Transverse colon (tissue), 4 donors: ENCODE measurements at regions of chr17 and their contacts with region 1.

Region 1: DNA sequence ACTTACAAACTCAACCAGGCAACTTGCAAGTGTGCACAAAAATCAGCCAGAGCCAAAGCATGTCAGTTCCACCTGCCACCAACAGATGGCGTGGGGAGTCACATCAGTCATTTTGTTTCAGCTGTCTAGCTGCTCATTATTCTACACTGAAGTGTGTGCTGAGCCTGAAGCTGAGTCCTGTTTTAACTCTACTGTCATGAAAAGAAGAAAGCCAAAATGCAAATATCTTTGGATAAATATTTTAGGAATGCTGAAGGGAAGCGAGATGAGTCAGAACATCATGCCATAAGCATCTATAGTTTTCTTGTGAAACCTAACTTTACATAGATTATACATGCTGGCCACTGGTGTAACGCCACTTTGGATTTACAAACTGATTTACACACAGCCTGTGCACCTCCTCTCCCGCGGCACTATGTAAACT is 172.6 kb downstream of the CDK5R1 start:
- DNase-seq: peak; percentile 73
- H3K4me3 ChIP-seq: no peak overlapping the region
- H3K27ac ChIP-seq: no peak overlapping the region
- H3K4me1 ChIP-seq: no peaks in the 10 kb centered on the region
- H3K27me3 ChIP-seq: no peaks in the 10 kb centered on the region
- CTCF ChIP-seq: peak; percentile 83 to 92 (median 90)
- EP300 ChIP-seq: no peak
- POLR2A ChIP-seq: no peak

Region 2: GRCh38 chr17:32569171-32570080 is 90.0 kb before region 1 on chr17:
- in situ Hi-C with region 1: no loop called
- intact Hi-C with region 1: no loop called
- DNase-seq: no peak
- H3K4me3 ChIP-seq: no peak overlapping the region
- H3K27ac ChIP-seq: no peak overlapping the region
- H3K4me1 ChIP-seq: no peaks in the 10 kb centered on the region
- H3K27me3 ChIP-seq: no peaks in the 10 kb centered on the region
- CTCF ChIP-seq: no peak
- EP300 ChIP-seq: no peak
- POLR2A ChIP-seq: no peak

Region 3: GRCh38 chr17:32769839-32770238 is 110.4 kb after region 1 on chr17:
- in situ Hi-C with region 1: loop called in 2 of 4 experiments (anchors 10 to 25 kb)
- intact Hi-C with region 1: no loop called
- DNase-seq: no peak
- H3K4me3 ChIP-seq: no peak overlapping the region
- H3K27ac ChIP-seq: no peak overlapping the region
- H3K4me1 ChIP-seq: peaks cover 0 to 16% (median 6%) of the 10 kb centered on the region in 4 donors
- H3K27me3 ChIP-seq: no peaks in the 10 kb centered on the region
- CTCF ChIP-seq: peak in 1 of 5 experiments; percentile 8
- EP300 ChIP-seq: no peak
- POLR2A ChIP-seq: no peak